WTC11 (cell line): ENCODE measurements at regions of chr3 and their contacts with region 1.

Region 1: GRCh38 chr3:46496741-46497554 is 828 bp upstream of the RTP3 start:
- DNase-seq: peak; percentile 71
- ATAC-seq: peak; percentile 91
- H3K4me3 Mint-ChIP-seq: no peak overlapping the region
- H3K27ac Mint-ChIP-seq: no peak overlapping the region
- H3K4me1 Mint-ChIP-seq: peaks cover 24% of the 10 kb centered on the region
- H3K27me3 Mint-ChIP-seq: peaks cover 13% of the 10 kb centered on the region
- CTCF ChIP-seq: peak; percentile 19; the same call in 1 of the 2 replicates

Region 2: DNA sequence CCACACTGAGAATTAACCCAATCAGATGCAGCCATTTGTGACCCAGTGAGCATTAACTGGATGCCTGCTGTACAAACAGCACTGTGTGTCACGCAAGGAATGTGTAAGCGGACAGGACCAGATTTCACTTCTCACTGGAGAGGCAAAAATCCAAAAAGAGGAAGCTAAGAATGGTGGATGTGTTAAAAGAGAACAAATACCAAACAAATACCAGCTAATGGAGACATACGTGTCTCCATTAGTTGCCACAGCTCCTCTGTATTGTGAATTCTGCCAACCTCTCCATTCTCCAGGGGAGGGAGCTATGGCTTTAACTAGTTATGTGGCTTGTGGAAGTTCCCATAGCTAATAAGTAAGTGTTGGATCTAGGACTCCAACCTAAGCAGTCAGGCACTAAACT is 34.8 kb before region 1 on chr3:
- CTCF ChIA-PET with region 1: interaction called, 13 read pairs
- POLR2A ChIA-PET with region 1: no interaction called
- DNase-seq: no peak
- ATAC-seq: peak; percentile 63
- H3K4me3 Mint-ChIP-seq: no peak overlapping the region
- H3K27ac Mint-ChIP-seq: no peak overlapping the region
- H3K4me1 Mint-ChIP-seq: peaks cover 3% of the 10 kb centered on the region
- H3K27me3 Mint-ChIP-seq: peaks cover 42% of the 10 kb centered on the region
- CTCF ChIP-seq: no peak

Region 3: DNA sequence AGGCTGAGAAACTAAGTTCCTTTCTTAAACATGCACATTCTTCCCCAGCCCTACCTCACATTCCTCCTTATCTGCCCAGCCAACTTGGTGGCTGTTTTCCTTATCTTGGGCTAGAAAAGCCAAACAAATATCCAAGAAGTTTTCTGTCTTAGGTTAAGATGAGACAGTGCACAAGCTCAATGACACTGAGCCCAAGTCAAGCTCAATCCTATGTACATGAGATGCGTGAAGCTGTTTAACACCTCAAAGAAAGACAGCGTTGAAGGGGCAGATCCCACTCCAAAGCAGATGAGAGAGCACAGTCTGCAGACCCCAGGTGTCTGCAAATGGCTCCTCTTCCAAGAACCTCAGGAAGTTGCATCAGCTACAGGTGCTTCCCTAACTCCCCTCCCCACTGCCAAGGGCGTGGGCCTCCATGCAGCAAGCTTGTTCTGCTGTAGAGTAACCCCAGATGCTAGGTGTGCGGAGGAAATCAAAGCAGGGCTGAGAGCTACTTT is 52.5 kb after region 1 on chr3:
- CTCF ChIA-PET with region 1: interaction called, 10 read pairs
- POLR2A ChIA-PET with region 1: no interaction called
- DNase-seq: peak; percentile 38
- ATAC-seq: no peak
- H3K4me3 Mint-ChIP-seq: no peak overlapping the region
- H3K27ac Mint-ChIP-seq: peak overlapping the region; percentile 87
- H3K4me1 Mint-ChIP-seq: peaks cover 52% of the 10 kb centered on the region
- H3K27me3 Mint-ChIP-seq: no peaks in the 10 kb centered on the region; the same call in 1 of the 2 replicates
- CTCF ChIP-seq: no peak

Region 4: DNA sequence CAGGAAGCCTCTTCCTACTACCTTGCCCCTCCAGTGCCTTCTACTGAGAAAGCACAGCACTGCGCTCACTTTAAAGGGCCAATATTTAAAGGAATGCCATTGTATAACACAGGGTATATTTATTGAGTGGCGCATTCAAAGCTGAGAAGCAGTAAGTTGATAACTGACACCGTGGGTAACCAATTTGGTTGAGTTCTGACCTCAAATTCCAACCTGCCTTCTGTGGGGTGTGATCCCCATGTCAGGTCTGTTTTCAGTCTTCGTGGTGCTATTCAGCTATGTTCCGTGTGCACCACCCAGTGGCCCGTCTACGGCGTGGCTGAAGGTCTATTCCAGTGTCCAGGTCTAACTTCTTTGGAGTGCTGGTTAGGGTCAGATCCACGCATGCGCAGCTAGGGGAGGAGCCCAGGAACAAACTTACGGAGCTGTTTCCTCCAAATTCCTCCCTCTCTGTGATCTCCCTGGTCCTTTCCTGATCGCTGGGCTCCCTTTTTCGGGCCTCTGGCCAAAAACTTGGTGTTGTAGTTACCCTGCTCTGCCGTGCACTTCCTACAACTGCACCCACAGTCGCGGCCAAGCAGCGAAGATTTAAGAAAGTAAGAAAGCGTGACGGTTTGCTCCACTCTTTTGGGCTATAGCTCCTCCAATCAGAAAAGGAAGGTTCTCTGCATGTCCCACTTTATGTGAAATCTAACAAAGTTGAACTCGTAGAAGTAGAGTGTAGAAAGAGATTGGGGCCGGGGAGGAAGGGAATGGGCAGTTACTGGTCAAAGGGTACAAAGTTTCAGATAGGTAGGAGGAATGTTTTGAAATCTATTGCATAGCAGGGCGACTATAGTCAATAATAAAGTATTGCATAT is 61.5 kb after region 1 on chr3:
- CTCF ChIA-PET with region 1: interaction called, 33 read pairs
- POLR2A ChIA-PET with region 1: no interaction called
- DNase-seq: peak; percentile 76
- ATAC-seq: peak; percentile 88
- H3K4me3 Mint-ChIP-seq: peak overlapping the region; percentile 57
- H3K27ac Mint-ChIP-seq: peak overlapping the region; percentile 92
- H3K4me1 Mint-ChIP-seq: peaks cover 60% of the 10 kb centered on the region
- H3K27me3 Mint-ChIP-seq: no peaks in the 10 kb centered on the region; the same call in 1 of the 2 replicates
- CTCF ChIP-seq: no peak

Region 5: DNA sequence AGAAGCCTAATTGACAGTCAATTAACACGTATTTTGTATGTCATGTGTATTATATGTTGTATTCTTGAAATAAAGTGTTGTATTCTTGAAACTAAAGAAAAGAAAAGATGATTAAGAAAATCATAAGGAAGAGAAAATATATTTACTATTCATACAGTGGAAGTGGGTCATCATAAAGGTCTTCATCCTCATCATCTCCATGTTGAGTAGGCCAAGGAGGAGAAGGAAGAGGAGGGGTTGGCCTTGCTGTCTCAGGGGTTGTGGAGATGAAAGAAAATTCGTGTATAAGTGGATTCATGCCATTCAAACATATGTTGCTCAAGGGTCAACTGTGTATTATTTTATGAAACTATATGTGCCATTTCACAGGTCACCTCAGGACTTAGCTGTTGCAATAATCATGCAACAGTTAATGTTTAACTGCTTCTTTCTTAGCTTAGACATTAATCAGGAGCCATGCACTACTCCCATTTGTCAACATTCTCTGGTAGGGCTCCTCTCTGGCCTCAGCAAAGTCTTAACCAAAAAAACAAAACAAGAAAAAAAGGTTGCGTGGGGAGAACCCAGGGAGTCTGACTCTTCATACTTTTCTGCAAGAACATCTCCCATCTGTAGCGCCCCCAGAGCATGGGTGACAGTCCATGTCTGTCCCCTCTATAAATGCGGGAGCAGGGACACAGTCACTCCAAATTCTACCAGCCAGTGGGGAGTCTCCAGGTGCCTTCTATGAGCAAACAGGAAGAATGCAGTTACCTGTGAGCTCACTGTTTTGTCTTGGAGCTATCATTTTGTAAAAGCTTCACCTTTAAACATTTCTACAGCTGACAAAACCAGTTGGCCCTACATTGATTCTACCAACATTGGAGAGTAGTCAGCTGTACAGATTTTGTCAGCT is 89.1 kb after region 1 on chr3:
- CTCF ChIA-PET with region 1: interaction called, 21 read pairs
- POLR2A ChIA-PET with region 1: no interaction called
- DNase-seq: no peak
- ATAC-seq: peak; percentile 54
- H3K4me3 Mint-ChIP-seq: no peak overlapping the region
- H3K27ac Mint-ChIP-seq: peak overlapping the region; percentile 42
- H3K4me1 Mint-ChIP-seq: peaks cover 41% of the 10 kb centered on the region
- H3K27me3 Mint-ChIP-seq: peaks cover 44% of the 10 kb centered on the region
- CTCF ChIP-seq: no peak